CD14-positive monocyte (primary cell): ENCODE measurements at regions of chr6 and their contacts with region 1.

Region 1: GRCh38 chr6:144104898-144105487 is 9.6 kb upstream of the SF3B5 start:
- DNase-seq: peak; percentile 65 to 77 (median 71)
- H3K4me3 ChIP-seq: no peak overlapping the region
- H3K4me3 Mint-ChIP-seq: no peak overlapping the region
- H3K27ac ChIP-seq: no peak overlapping the region
- H3K27ac Mint-ChIP-seq: no peak overlapping the region
- H3K4me1 ChIP-seq: no peaks in the 10 kb centered on the region
- H3K4me1 Mint-ChIP-seq: peaks cover 3% of the 10 kb centered on the region
- H3K27me3 ChIP-seq: no peaks in the 10 kb centered on the region
- H3K27me3 Mint-ChIP-seq: peaks cover 0 to 2% (median 0%) of the 10 kb centered on the region in 3 donors
- CTCF ChIP-seq: peak; percentile 72

Region 2: DNA sequence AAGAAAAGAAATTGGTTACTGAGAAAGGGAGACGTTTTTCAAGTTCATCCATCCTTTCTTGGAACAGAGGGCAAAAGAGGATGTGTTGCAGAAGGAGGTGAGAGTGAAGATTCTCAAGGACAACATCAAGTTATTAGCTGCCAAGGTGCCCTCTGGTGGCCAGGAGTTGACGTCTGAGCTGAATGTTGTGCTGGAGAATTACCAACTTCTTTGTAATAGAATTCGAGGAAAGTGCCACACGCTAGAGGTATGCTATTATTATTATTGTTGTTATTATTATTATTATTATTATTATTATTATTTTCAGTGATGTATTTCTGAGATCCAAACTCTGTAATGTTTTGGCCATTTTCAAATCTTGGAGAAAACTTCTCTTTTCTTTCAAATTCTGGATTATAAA is 377.1 kb after region 1 on chr6:
- intact Hi-C with region 1: loop called in 1 of 2 experiments (anchors 10 kb)
- DNase-seq: peak; percentile 27 to 37 (median 36)
- H3K4me3 ChIP-seq: no peak overlapping the region
- H3K4me3 Mint-ChIP-seq: no peak overlapping the region
- H3K27ac ChIP-seq: no peak overlapping the region
- H3K27ac Mint-ChIP-seq: peak overlapping the region in 1 of 7 donors; percentile 27
- H3K4me1 ChIP-seq: no peaks in the 10 kb centered on the region
- H3K4me1 Mint-ChIP-seq: no peaks in the 10 kb centered on the region
- H3K27me3 ChIP-seq: no peaks in the 10 kb centered on the region
- H3K27me3 Mint-ChIP-seq: no peaks in the 10 kb centered on the region
- CTCF ChIP-seq: peak; percentile 76